ENCODE measurements at regions of chr18 and their contacts with region 1.

Region 1: GRCh38 chr18:32470713-32471633 is at the start of gene GAREM1:
- DNase-seq: peak; percentile 95
- H3K4me3 ChIP-seq: peak within 1 kb of the TSS; percentile 57
- H3K27ac ChIP-seq: peak within 1 kb of the TSS; percentile 60
- H3K4me1 ChIP-seq: no peaks in the 10 kb centered on the region
- H3K27me3 ChIP-seq: no peaks in the 10 kb centered on the region
- CTCF ChIP-seq: peak; percentile 38
- total RNA-seq, gene GAREM1: 15.3 to 20.1 TPM

Region 2: DNA sequence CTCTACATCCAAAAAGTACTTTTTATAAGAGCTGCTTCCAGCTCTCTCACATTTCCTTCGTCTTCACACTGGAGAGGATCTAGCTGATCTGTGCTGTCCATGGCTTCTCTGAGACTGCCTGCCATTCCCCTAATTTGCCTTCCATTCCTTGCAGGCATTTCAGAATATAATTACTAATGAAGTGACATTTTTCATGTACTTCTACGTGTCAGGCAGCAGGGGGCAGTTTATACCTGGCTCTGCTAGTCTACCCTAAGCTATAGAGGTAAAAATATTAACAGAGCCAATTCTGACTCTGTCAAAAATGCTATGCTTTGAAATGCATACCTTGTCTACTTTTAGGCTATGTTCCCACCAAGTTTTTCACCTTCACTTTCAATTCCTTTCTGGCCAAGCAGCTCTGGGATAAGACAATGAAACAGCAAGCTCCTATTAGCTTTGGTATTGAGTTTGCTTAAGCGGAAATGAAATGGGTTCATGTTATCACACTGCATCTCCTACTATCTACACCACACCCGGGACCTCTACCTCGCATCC is 199.2 kb before region 1 on chr18:
- intact Hi-C with region 1: loop called (anchors 5 kb)
- DNase-seq: no peak
- H3K4me3 ChIP-seq: no peak overlapping the region
- H3K27ac ChIP-seq: no peak overlapping the region
- H3K4me1 ChIP-seq: no peaks in the 10 kb centered on the region
- H3K27me3 ChIP-seq: no peaks in the 10 kb centered on the region
- CTCF ChIP-seq: peak; percentile 51

Region 3: GRCh38 chr18:32289483-32290075 is 181.4 kb before region 1 on chr18:
- intact Hi-C with region 1: loop called (anchors 5 kb)
- DNase-seq: peak; percentile 77
- H3K4me3 ChIP-seq: no peak overlapping the region
- H3K27ac ChIP-seq: no peak overlapping the region
- H3K4me1 ChIP-seq: no peaks in the 10 kb centered on the region
- H3K27me3 ChIP-seq: no peaks in the 10 kb centered on the region
- CTCF ChIP-seq: peak; percentile 62

Region 4: GRCh38 chr18:33684979-33685378 is 1214.0 kb after region 1 on chr18:
- intact Hi-C with region 1: no loop called
- DNase-seq: no peak
- H3K4me3 ChIP-seq: no peak overlapping the region
- H3K27ac ChIP-seq: no peak overlapping the region
- H3K4me1 ChIP-seq: no peaks in the 10 kb centered on the region
- H3K27me3 ChIP-seq: no peaks in the 10 kb centered on the region
- CTCF ChIP-seq: no peak